HepG2 (cell line): ENCODE measurements at regions of chr7 and their contacts with region 1.

Region 1: GRCh38 chr7:80876873-80877414 is 41.9 kb downstream of the SEMA3C start:
- DNase-seq: no peak
- ATAC-seq: no peak
- H3K4me3 ChIP-seq: no peak overlapping the region
- H3K27ac ChIP-seq: no peak overlapping the region
- H3K4me1 ChIP-seq: no peaks in the 10 kb centered on the region
- H3K27me3 ChIP-seq: no peaks in the 10 kb centered on the region
- CTCF ChIP-seq: no peak
- EP300 ChIP-seq: no peak
- POLR2A ChIP-seq: no peak
- RAD21 ChIP-seq: no peak

Region 2: GRCh38 chr7:80902716-80903308 is 25.9 kb after region 1 on chr7:
- CTCF ChIA-PET with region 1: no interaction called
- POLR2A ChIA-PET with region 1: no interaction called
- in situ Hi-C with region 1: no loop called
- intact Hi-C with region 1: loop called (anchors 1 kb)
- DNase-seq: no peak
- ATAC-seq: no peak
- H3K4me3 ChIP-seq: no peak overlapping the region
- H3K27ac ChIP-seq: no peak overlapping the region
- H3K4me1 ChIP-seq: no peaks in the 10 kb centered on the region
- H3K27me3 ChIP-seq: no peaks in the 10 kb centered on the region
- CTCF ChIP-seq: no peak
- EP300 ChIP-seq: no peak
- POLR2A ChIP-seq: no peak
- RAD21 ChIP-seq: no peak

Region 3: DNA sequence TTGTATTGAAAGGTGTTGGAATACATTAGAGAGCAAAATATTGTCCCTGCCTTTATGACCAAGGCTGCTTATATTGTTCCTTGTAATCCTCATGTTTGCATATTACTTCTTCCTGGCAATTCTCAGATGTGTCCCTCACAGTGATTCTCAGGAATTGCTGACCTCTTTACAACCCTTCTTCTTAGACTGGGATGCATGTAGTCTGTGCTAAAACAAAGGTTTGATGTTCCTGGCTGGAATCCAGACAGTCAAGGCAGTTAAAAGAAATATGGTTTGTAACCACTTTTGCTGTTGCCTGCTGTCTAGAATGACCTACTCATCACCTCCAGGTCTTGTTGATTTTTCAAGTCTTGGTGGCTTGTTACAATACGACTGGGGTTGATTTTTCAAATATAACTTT is 525.3 kb after region 1 on chr7:
- CTCF ChIA-PET with region 1: no interaction called
- POLR2A ChIA-PET with region 1: no interaction called
- in situ Hi-C with region 1: no loop called
- intact Hi-C with region 1: no loop called
- DNase-seq: no peak
- ATAC-seq: no peak
- H3K4me3 ChIP-seq: no peak overlapping the region
- H3K27ac ChIP-seq: no peak overlapping the region
- H3K4me1 ChIP-seq: no peaks in the 10 kb centered on the region
- H3K27me3 ChIP-seq: no peaks in the 10 kb centered on the region
- CTCF ChIP-seq: no peak
- EP300 ChIP-seq: no peak
- POLR2A ChIP-seq: no peak
- RAD21 ChIP-seq: no peak